ENCODE measurements at regions of chr5 and their contacts with region 1.

Region 1: DNA sequence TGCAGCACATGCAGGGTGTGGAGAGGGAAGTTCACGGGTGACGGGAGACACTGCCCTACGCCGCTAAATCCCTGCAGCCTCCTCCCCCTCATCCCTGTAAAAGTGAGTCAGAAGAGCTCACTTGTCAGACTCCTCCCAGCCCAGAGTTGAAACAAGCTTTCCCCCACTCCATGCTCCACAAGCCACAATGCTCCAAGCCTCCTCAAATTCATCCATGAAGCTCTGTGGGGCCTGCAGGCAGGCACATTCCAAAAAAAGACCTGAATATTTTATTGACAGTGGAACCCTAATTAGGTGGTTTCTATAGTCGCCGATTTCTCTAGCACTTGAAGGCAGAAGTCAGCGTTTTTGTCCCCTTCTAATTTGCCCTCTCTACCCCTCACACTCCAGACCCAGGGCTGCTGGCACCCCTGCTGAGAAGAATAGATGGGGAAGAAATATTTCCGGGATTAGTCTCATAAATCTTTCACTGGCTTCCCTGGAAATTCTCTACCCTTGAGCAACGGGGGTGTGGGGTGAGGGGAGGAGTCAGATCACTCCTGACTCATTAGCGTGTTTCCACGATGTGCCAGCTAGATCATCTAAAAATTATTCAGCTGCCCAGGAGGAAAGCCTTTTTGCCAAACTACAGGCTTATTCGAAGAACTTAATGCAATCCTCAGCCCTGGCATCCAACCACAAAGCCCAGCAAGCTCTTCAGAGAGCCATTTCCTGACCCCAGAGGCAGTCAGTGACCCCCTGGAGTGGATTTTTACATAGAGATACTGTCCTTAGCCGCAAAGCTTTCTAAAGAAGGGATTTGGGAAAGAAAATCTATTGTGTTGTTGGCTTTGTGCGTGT is 97.2 kb downstream of the ENC1 start:
- DNase-seq: peak; percentile 86 to 97
- H3K4me3 ChIP-seq: peak overlapping the region; percentile 31; the same call in 1 of the 2 replicates
- H3K27ac ChIP-seq: peak overlapping the region; percentile 95
- H3K4me1 ChIP-seq: peaks cover 73% of the 10 kb centered on the region
- H3K27me3 ChIP-seq: no peaks in the 10 kb centered on the region
- CTCF ChIP-seq: no peak

Region 2: DNA sequence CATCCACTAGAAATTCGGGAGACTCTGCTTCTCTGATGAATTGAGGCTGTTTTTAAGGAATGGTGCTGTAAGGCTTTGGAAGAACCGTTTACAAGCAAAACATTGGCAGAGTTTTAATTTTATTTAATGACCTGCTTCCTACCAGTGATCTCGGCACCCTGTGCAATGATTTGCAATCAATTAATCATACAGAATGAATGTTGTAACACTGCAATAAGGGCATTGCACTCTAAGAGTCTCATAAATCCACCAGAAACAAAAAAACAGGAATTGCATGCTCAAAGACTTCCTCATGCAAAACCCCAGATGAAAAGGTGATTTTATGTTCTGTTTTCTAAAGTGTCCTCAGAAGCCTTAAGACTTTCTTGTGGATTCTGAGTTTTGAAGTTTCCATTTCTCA is 621.6 kb before region 1 on chr5:
- CTCF ChIA-PET with region 1: no interaction called
- POLR2A ChIA-PET with region 1: no interaction called
- intact Hi-C with region 1: no loop called
- DNase-seq: no peak
- H3K4me3 ChIP-seq: no peak overlapping the region
- H3K27ac ChIP-seq: no peak overlapping the region
- H3K4me1 ChIP-seq: no peaks in the 10 kb centered on the region
- H3K27me3 ChIP-seq: no peaks in the 10 kb centered on the region
- CTCF ChIP-seq: no peak

Region 3: GRCh38 chr5:74149395-74149794 is 394.0 kb before region 1 on chr5:
- CTCF ChIA-PET with region 1: no interaction called
- POLR2A ChIA-PET with region 1: no interaction called
- intact Hi-C with region 1: loop called (anchors 10 kb)
- DNase-seq: no peak
- H3K4me3 ChIP-seq: no peak overlapping the region
- H3K27ac ChIP-seq: no peak overlapping the region
- H3K4me1 ChIP-seq: no peaks in the 10 kb centered on the region
- H3K27me3 ChIP-seq: no peaks in the 10 kb centered on the region
- CTCF ChIP-seq: no peak

Region 4: GRCh38 chr5:74304536-74304935 is 238.8 kb before region 1 on chr5:
- CTCF ChIA-PET with region 1: no interaction called
- POLR2A ChIA-PET with region 1: no interaction called
- intact Hi-C with region 1: no loop called
- DNase-seq: no peak
- H3K4me3 ChIP-seq: no peak overlapping the region
- H3K27ac ChIP-seq: no peak overlapping the region
- H3K4me1 ChIP-seq: no peaks in the 10 kb centered on the region
- H3K27me3 ChIP-seq: no peaks in the 10 kb centered on the region
- CTCF ChIP-seq: no peak

Region 5: GRCh38 chr5:74357827-74358226 is 185.5 kb before region 1 on chr5:
- CTCF ChIA-PET with region 1: no interaction called
- POLR2A ChIA-PET with region 1: no interaction called
- intact Hi-C with region 1: no loop called
- DNase-seq: no peak
- H3K4me3 ChIP-seq: no peak overlapping the region
- H3K27ac ChIP-seq: no peak overlapping the region
- H3K4me1 ChIP-seq: 0 out of 2 replicates have a peak, but pooled peaks cover 3% of the 10 kb centered on the region
- H3K27me3 ChIP-seq: no peaks in the 10 kb centered on the region
- CTCF ChIP-seq: no peak

Region 6: GRCh38 chr5:74516211-74516636 is 27.2 kb before region 1 on chr5:
- CTCF ChIA-PET with region 1: interaction called, 4 read pairs
- POLR2A ChIA-PET with region 1: no interaction called
- intact Hi-C with region 1: loop called (anchors 2 kb)
- DNase-seq: no peak
- H3K4me3 ChIP-seq: no peak overlapping the region
- H3K27ac ChIP-seq: no peak overlapping the region
- H3K4me1 ChIP-seq: peaks cover 36% of the 10 kb centered on the region
- H3K27me3 ChIP-seq: no peaks in the 10 kb centered on the region
- CTCF ChIP-seq: no peak

Region 7: GRCh38 chr5:74576941-74577456 is 33.6 kb after region 1 on chr5:
- CTCF ChIA-PET with region 1: no interaction called
- POLR2A ChIA-PET with region 1: interaction called, 6 read pairs
- intact Hi-C with region 1: loop called (anchors 1 kb)
- DNase-seq: peak; percentile 53 to 68
- H3K4me3 ChIP-seq: no peak overlapping the region
- H3K27ac ChIP-seq: peak overlapping the region; percentile 82
- H3K4me1 ChIP-seq: peaks cover 31% of the 10 kb centered on the region
- H3K27me3 ChIP-seq: no peaks in the 10 kb centered on the region
- CTCF ChIP-seq: no peak

Region 8: DNA sequence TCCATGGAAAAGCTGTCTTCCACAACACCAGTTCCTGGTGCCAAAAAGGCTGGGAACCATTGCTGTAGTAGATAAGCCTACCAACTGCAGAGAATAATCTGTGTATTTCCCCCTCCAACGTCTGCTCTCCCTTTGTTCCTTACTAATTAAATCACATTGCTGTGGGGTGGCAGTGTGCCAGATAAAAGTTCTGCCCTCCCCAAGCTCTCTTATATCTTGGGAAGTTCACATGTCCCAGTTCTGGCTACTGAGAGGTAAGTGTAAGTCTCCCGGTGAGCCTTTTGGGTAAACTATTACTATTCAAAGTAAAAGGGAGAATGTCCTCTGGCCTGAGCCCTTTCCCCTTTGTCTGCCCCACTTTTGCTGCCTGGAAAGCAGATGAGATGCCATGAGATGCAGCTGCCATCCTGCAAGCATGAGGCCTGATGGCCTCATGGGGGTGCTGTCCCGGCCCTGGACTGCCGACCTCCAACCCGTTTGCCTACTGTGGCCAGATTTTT is 82.4 kb after region 1 on chr5:
- CTCF ChIA-PET with region 1: no interaction called
- POLR2A ChIA-PET with region 1: no interaction called
- intact Hi-C with region 1: loop called (anchors 1 kb)
- DNase-seq: no peak
- H3K4me3 ChIP-seq: no peak overlapping the region
- H3K27ac ChIP-seq: peak overlapping the region; percentile 94
- H3K4me1 ChIP-seq: peaks cover 88% of the 10 kb centered on the region
- H3K27me3 ChIP-seq: no peaks in the 10 kb centered on the region
- CTCF ChIP-seq: peak; percentile 48